Naive thymus-derived CD4-positive, alpha-beta T cell (primary cell): ENCODE measurements at regions of chr16 and their contacts with region 1.

Region 1: DNA sequence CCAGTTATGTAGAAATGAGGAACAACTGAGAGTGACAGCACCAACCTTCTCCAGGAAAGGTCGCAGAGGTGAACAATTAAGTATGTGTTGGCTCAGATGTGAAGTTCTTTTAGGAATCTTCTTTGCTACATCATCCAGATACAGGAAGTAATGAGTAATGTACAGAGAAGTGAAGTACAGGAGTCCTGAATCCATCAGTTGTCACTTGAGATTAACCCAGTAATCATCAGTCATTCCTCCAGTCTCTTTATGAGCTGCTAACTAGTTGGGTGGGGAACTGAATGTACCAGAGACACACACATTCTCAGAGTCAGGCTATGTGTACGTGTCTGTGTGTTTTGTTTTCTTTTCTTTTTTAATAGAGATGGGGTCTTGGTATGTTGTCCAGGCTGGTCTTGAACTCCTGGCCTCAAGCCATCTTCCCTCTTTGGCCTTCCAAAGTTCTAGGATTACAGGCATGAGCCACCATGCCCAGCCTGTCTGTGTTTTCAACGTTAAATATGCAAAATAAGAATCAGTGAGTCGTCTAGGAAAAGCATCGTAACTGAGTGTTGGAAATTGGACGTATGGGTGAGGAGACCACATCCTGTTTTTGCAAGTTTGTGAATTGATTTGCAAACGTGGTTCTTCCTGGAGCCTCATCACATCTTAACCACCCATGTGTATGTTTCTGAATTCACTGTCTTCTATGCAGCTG is 19.9 kb downstream of the ZNF200 start:
- DNase-seq: peak in 7 of 9 donors; percentile 75 to 91 (median 87)
- ATAC-seq: peak; percentile 95
- H3K4me3 ChIP-seq: peak overlapping the region; percentile 38
- H3K4me3 Mint-ChIP-seq: peak overlapping the region; percentile 69 to 88 (median 76)
- H3K27ac ChIP-seq: peak overlapping the region; percentile 75
- H3K27ac Mint-ChIP-seq: peak overlapping the region; percentile 96 to 100 (median 99)
- H3K4me1 ChIP-seq: peaks cover 24 to 30% of the 10 kb centered on the region in 2 donors
- H3K4me1 Mint-ChIP-seq: peaks cover 30 to 51% (median 39%) of the 10 kb centered on the region in 7 donors
- H3K27me3 ChIP-seq: no peaks in the 10 kb centered on the region
- H3K27me3 Mint-ChIP-seq: no peaks in the 10 kb centered on the region

Region 2: GRCh38 chr16:3173892-3174617 is 41.0 kb before region 1 on chr16:
- CTCF ChIA-PET with region 1: no interaction called
- POLR2A ChIA-PET with region 1: interaction called, 11 read pairs
- intact Hi-C with region 1: no loop called
- DNase-seq: no peak
- ATAC-seq: peak; percentile 13
- H3K4me3 ChIP-seq: no peak overlapping the region
- H3K4me3 Mint-ChIP-seq: peak overlapping the region in 9 of 10 donors; percentile 22 to 70 (median 54)
- H3K27ac ChIP-seq: no peak overlapping the region
- H3K27ac Mint-ChIP-seq: peak overlapping the region in 5 of 9 donors; percentile 2 to 71 (median 18)
- H3K4me1 ChIP-seq: peaks cover 29 to 39% of the 10 kb centered on the region in 2 donors
- H3K4me1 Mint-ChIP-seq: peaks cover 21 to 42% (median 34%) of the 10 kb centered on the region in 7 donors
- H3K27me3 ChIP-seq: peaks cover 3 to 37% of the 10 kb centered on the region in 2 donors
- H3K27me3 Mint-ChIP-seq: peaks cover 46 to 81% (median 53%) of the 10 kb centered on the region in 5 donors

Region 3: DNA sequence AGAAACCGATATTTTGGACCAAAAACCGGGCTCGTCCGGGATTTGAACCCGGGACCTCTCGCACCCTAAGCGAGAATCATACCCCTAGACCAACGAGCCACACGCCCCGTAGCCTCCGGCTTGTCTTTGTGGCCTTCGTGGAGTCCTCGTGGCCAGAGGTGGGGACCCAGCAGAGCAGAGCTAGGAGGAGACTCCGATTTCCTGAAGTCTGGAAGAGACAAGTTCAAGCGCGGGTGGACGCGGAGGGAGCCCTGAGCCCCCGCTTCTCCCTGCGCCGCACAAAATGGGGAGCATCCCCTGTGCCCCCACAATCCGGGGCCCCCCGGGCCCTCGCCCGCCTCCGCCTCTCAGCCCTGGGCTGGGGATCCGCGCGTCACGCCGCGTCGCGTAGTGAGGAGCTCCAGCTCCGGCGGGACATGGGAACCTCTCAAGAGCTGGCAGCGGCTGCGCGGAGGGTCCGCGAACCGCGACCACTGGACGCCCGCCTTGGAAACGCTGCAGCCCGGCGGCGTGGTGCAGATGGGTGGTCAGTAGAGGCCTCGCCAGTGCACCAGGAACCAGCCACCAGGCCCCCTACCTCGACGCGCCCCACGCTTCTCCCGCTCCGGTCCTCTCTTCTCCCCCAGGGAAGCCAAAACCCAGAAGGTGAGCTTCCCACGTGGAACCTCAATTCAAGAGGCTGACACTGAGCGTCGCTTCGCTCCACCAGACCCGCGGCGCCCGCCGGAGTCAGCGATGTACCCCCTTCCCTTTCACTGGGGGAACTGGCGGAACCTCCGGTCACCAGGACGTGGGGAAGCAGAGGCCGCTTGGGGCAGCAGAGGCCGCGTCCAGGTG is 32.2 kb before region 1 on chr16:
- CTCF ChIA-PET with region 1: interaction called, 3 read pairs
- POLR2A ChIA-PET with region 1: interaction called, 5 read pairs
- intact Hi-C with region 1: loop called (anchors 2 to 5 kb)
- DNase-seq: peak in 5 of 9 donors; percentile 32 to 71 (median 43)
- ATAC-seq: peak; percentile 41
- H3K4me3 ChIP-seq: peak overlapping the region; percentile 58
- H3K4me3 Mint-ChIP-seq: peak overlapping the region; percentile 72 to 86 (median 79)
- H3K27ac ChIP-seq: no peak overlapping the region
- H3K27ac Mint-ChIP-seq: peak overlapping the region in 7 of 9 donors; percentile 22 to 86 (median 49)
- H3K4me1 ChIP-seq: peaks cover 8 to 16% of the 10 kb centered on the region in 2 donors
- H3K4me1 Mint-ChIP-seq: peaks cover 24 to 38% (median 27%) of the 10 kb centered on the region in 7 donors
- H3K27me3 ChIP-seq: peaks cover 4 to 26% of the 10 kb centered on the region in 2 donors
- H3K27me3 Mint-ChIP-seq: peaks cover 77 to 88% (median 81%) of the 10 kb centered on the region in 5 donors

Region 4: GRCh38 chr16:3188925-3189825 is 25.9 kb before region 1 on chr16:
- CTCF ChIA-PET with region 1: no interaction called
- POLR2A ChIA-PET with region 1: interaction called, 4 read pairs
- intact Hi-C with region 1: loop called (anchors 1 to 2 kb)
- DNase-seq: peak in 2 of 9 donors; percentile 32 to 53
- ATAC-seq: peak; percentile 44
- H3K4me3 ChIP-seq: peak overlapping the region; percentile 6
- H3K4me3 Mint-ChIP-seq: peak overlapping the region; percentile 64 to 86 (median 78)
- H3K27ac ChIP-seq: no peak overlapping the region
- H3K27ac Mint-ChIP-seq: peak overlapping the region in 7 of 9 donors; percentile 28 to 88 (median 72)
- H3K4me1 ChIP-seq: peaks cover 23 to 26% of the 10 kb centered on the region in 2 donors
- H3K4me1 Mint-ChIP-seq: peaks cover 31 to 49% (median 43%) of the 10 kb centered on the region in 7 donors
- H3K27me3 ChIP-seq: peaks cover 28 to 32% of the 10 kb centered on the region in 2 donors
- H3K27me3 Mint-ChIP-seq: peaks cover 65 to 74% (median 72%) of the 10 kb centered on the region in 5 donors

Region 5: DNA sequence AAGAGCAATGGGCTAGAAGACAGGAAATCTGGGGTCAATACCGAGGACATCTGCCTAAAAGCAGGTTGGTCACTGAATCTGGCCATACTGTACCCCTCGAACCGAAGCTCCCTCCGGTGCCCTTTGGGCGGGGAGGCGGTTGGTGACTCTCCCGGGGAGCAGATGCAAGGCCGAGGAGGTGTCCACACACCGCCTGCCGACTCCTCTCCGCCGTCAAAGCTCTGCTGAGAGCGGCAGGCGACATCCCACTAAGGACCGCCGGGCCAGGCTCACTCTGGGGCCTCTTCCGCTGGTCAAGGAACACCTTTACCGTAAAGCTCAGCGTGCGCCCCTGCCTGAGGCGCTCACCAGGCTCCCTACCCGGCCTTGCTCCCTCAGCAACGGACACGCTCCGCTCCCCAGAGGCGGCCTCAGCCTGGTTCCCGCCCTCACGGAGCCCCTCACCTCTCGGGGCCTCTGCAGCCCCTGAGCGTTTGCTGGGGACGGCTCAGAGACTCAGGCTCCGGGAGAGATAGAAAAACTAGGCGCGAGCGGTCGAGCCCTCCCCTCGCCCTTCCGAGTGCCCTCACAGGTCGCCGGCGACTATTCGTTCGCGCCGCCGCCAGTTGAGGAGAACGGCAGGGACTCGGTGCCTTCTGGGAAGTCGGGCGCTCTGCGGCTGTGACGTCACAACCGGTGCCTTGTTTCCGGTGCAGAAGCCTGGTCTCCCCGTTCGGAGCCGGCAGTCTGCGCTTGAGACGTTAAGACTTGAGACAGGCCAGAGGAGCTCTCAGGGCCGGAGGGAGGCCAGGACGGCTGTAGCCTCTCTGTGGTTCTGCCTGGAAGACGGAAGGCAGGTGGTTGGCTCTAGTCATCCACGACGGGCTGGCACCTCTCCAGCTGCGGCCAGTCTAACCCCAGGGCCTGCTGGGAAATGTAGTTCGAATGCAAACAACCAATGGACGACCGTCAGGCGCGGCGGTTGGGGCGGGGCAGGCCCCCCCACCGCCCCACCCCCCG is 19.8 kb after region 1 on chr16 and contains the start of gene ZNF200:
- CTCF ChIA-PET with region 1: interaction called, 5 read pairs
- POLR2A ChIA-PET with region 1: interaction called, 35 read pairs
- intact Hi-C with region 1: loop called in 1 of 2 experiments (anchors 1 kb)
- DNase-seq: peak; percentile 85 to 96 (median 94)
- ATAC-seq: peak; percentile 94
- H3K4me3 ChIP-seq: peak within 1 kb of the TSS; percentile 98
- H3K4me3 Mint-ChIP-seq: peak within 1 kb of the TSS; percentile 88 to 97 (median 94)
- H3K27ac ChIP-seq: peak within 1 kb of the TSS; percentile 90
- H3K27ac Mint-ChIP-seq: peak within 1 kb of the TSS; percentile 93 to 98 (median 97)
- H3K4me1 ChIP-seq: peaks cover 18 to 23% of the 10 kb centered on the region in 2 donors
- H3K4me1 Mint-ChIP-seq: peaks cover 20 to 48% (median 39%) of the 10 kb centered on the region in 7 donors
- H3K27me3 ChIP-seq: no peaks in the 10 kb centered on the region
- H3K27me3 Mint-ChIP-seq: peaks cover 0 to 3% (median 0%) of the 10 kb centered on the region in 5 donors
- total RNA-seq, gene ZNF200: 4.8 to 33.3 (median 16.6) TPM